HCT116 (cell line): ENCODE measurements at regions of chr6 and their contacts with region 1.

Region 1: GRCh38 chr6:112180095-112180820 is 74.1 kb downstream of the LAMA4 start:
- DNase-seq: peak; percentile 74
- ATAC-seq: peak; percentile 86
- H3K4me3 ChIP-seq: no peak overlapping the region
- H3K27ac ChIP-seq: no peak overlapping the region
- H3K4me1 ChIP-seq: no peaks in the 10 kb centered on the region
- H3K27me3 ChIP-seq: no peaks in the 10 kb centered on the region
- CTCF ChIP-seq: peak; percentile 59 to 91 (median 84)
- POLR2A ChIP-seq: no peak
- RAD21 ChIP-seq: peak; percentile 94

Region 2: DNA sequence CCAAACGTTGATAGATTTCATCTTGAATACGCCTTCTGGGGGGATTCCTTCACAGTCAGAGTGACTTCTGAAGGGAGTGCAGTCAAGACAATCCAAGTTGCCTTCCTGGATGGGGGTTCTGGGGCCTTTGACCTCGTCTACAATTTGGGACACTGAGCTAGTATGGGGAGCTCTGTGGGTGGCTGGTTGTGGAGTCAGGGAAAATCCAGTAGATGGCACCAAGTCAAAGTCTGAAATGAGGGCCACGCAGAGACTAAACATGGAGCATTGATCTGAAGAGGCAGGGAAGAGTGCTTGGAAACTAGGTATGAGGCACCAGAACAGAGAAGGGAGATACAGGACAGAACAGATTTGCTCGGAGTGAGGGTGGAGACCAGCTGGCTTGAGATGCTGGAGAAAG is 169.9 kb before region 1 on chr6:
- CTCF ChIA-PET with region 1: no interaction called
- POLR2A ChIA-PET with region 1: no interaction called
- RAD21 ChIA-PET with region 1: no interaction called
- intact Hi-C with region 1: no loop called
- DNase-seq: no peak
- ATAC-seq: peak; percentile 47; the same call in 1 of the 2 replicates
- H3K4me3 ChIP-seq: no peak overlapping the region
- H3K27ac ChIP-seq: no peak overlapping the region
- H3K4me1 ChIP-seq: no peaks in the 10 kb centered on the region
- H3K27me3 ChIP-seq: no peaks in the 10 kb centered on the region
- CTCF ChIP-seq: 0 out of 6 replicates have a peak, but pooled peaks of 1 of the 3 experiments have one; percentile 14
- POLR2A ChIP-seq: no peak
- RAD21 ChIP-seq: peak; percentile 41

Region 3: GRCh38 chr6:112269114-112269513 is 88.9 kb after region 1 on chr6:
- CTCF ChIA-PET with region 1: interaction called, 41 read pairs
- POLR2A ChIA-PET with region 1: no interaction called
- RAD21 ChIA-PET with region 1: interaction called in 1 of 2 experiments, 5 read pairs
- intact Hi-C with region 1: no loop called
- DNase-seq: no peak
- ATAC-seq: peak; percentile 70; the same call in 1 of the 2 replicates
- H3K4me3 ChIP-seq: no peak overlapping the region
- H3K27ac ChIP-seq: no peak overlapping the region
- H3K4me1 ChIP-seq: no peaks in the 10 kb centered on the region
- H3K27me3 ChIP-seq: no peaks in the 10 kb centered on the region
- CTCF ChIP-seq: peak; percentile 29 to 43 (median 43); a peak in 5 of 6 replicates
- POLR2A ChIP-seq: no peak
- RAD21 ChIP-seq: peak; percentile 61

Region 4: GRCh38 chr6:112311950-112312547 is 131.8 kb after region 1 on chr6:
- CTCF ChIA-PET with region 1: interaction called, 63 read pairs
- POLR2A ChIA-PET with region 1: no interaction called
- RAD21 ChIA-PET with region 1: interaction called, 10 to 13 read pairs
- intact Hi-C with region 1: loop called (anchors 1 kb)
- DNase-seq: no peak
- ATAC-seq: peak; percentile 53; the same call in 1 of the 2 replicates
- H3K4me3 ChIP-seq: no peak overlapping the region
- H3K27ac ChIP-seq: no peak overlapping the region
- H3K4me1 ChIP-seq: no peaks in the 10 kb centered on the region
- H3K27me3 ChIP-seq: no peaks in the 10 kb centered on the region
- CTCF ChIP-seq: peak; percentile 45 to 85 (median 72)
- POLR2A ChIP-seq: no peak
- RAD21 ChIP-seq: peak; percentile 82

Region 5: GRCh38 chr6:112372226-112372806 is 192.1 kb after region 1 on chr6:
- CTCF ChIA-PET with region 1: interaction called, 19 read pairs
- POLR2A ChIA-PET with region 1: interaction called, 3 read pairs
- RAD21 ChIA-PET with region 1: interaction called in 1 of 2 experiments, 3 read pairs
- intact Hi-C with region 1: loop called (anchors 2 kb)
- DNase-seq: peak; percentile 18
- ATAC-seq: peak; percentile 91
- H3K4me3 ChIP-seq: no peak overlapping the region
- H3K27ac ChIP-seq: no peak overlapping the region
- H3K4me1 ChIP-seq: no peaks in the 10 kb centered on the region
- H3K27me3 ChIP-seq: no peaks in the 10 kb centered on the region
- CTCF ChIP-seq: peak; percentile 33 to 55 (median 48); a peak in 4 of 6 replicates
- POLR2A ChIP-seq: no peak
- RAD21 ChIP-seq: peak; percentile 63

Region 6: DNA sequence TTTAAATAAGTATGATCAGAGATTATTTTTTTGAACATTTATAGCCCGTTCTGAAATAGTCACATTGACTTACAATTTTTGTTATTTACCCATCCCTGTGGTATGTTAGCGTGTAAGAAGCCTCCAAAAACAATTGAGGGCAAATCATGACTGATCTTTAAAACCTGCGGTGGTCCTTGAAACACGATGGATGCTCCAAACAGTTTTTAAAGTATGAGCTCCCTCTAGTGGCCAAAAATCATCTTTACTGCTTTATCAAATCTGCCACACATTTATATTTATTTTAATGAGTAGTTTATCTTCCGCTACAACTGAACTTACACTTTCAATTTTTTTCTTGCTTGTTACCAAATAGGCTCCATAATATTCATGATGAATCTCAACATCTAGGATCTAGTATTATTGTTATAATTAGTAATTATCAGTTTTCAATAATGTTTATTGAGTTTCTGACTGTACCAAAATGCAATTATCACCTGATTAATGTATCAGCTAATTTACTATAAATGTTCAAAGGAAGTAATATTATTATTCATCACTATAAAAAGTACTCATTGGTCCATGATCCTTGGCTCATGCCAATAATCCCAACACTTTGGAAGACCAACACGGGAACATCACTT is 1729.1 kb after region 1 on chr6:
- CTCF ChIA-PET with region 1: no interaction called
- POLR2A ChIA-PET with region 1: no interaction called
- RAD21 ChIA-PET with region 1: no interaction called
- intact Hi-C with region 1: loop called (anchors 5 kb)
- DNase-seq: peak; percentile 36
- ATAC-seq: peak; percentile 65
- H3K4me3 ChIP-seq: no peak overlapping the region
- H3K27ac ChIP-seq: no peak overlapping the region
- H3K4me1 ChIP-seq: no peaks in the 10 kb centered on the region
- H3K27me3 ChIP-seq: no peaks in the 10 kb centered on the region
- CTCF ChIP-seq: peak; percentile 26 to 75 (median 54); a peak in 4 of 6 replicates
- POLR2A ChIP-seq: no peak
- RAD21 ChIP-seq: peak; percentile 81